ENCODE measurements at regions of chr4 and their contacts with region 1.

Region 1: DNA sequence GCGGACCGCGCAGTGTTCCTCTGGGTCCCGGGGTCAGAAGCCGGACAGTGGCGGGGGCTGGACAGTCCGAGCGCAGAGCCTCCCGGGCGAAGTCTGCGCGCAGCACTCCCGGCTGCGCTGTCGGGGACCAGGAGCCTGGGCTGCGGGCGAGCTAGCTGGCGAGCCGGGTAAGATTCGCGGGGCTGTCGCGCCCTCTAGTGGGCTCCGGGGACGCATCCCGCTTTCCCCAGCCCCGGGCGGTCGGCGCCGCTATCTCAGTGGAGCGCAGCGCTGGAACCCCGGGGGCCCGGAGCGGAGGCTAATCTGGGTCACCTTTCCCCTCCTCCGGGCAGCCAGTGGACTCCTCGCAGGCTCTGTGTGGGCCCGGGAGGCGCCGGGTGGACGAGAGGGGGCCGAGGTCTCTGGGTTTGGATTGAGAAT is 4.2 kb downstream of the PDGFRA start:
- DNase-seq: peak in 1 of 2 experiments; percentile 92
- H3K4me3 ChIP-seq: peak overlapping the region; percentile 51 to 85 (median 66)
- H3K27ac ChIP-seq: no peak overlapping the region
- H3K4me1 ChIP-seq: peaks cover 0 to 22% (median 15%) of the 10 kb centered on the region in 4 experiments; a peak in 6 of 7 replicates
- H3K27me3 ChIP-seq: peaks cover 38 to 56% (median 52%) of the 10 kb centered on the region in 4 experiments
- CTCF ChIP-seq: peak in 2 of 3 experiments; percentile 74 to 86; a peak in 3 of 4 replicates
- EP300 ChIP-seq: no peak
- POLR2A ChIP-seq: no peak
- RAD21 ChIP-seq: peak; percentile 79 to 90

Region 2: GRCh38 chr4:53015681-53016080 is 1217.6 kb before region 1 on chr4:
- CTCF ChIA-PET with region 1: interaction called, 51 read pairs
- POLR2A ChIA-PET with region 1: no interaction called
- DNase-seq: peak in 1 of 2 experiments; percentile 3
- H3K4me3 ChIP-seq: no peak overlapping the region
- H3K27ac ChIP-seq: no peak overlapping the region
- H3K4me1 ChIP-seq: no peaks in the 10 kb centered on the region; a peak in 1 of 7 replicates
- H3K27me3 ChIP-seq: no peaks in the 10 kb centered on the region
- CTCF ChIP-seq: peak in 2 of 3 experiments; percentile 58 to 67; a peak in 3 of 4 replicates
- EP300 ChIP-seq: no peak
- POLR2A ChIP-seq: no peak
- RAD21 ChIP-seq: peak; percentile 93 to 96

Region 3: GRCh38 chr4:53908661-53909078 is 324.6 kb before region 1 on chr4:
- CTCF ChIA-PET with region 1: interaction called, 65 read pairs
- POLR2A ChIA-PET with region 1: no interaction called
- DNase-seq: no peak
- H3K4me3 ChIP-seq: no peak overlapping the region
- H3K27ac ChIP-seq: no peak overlapping the region
- H3K4me1 ChIP-seq: peaks cover 0 to 7% (median 3%) of the 10 kb centered on the region in 4 experiments; a peak in 3 of 7 replicates
- H3K27me3 ChIP-seq: no peaks in the 10 kb centered on the region; a peak in 2 of 7 replicates
- CTCF ChIP-seq: peak in 2 of 3 experiments; percentile 55 to 76; a peak in 3 of 4 replicates
- EP300 ChIP-seq: no peak
- POLR2A ChIP-seq: no peak
- RAD21 ChIP-seq: peak; percentile 83 to 85

Region 4: DNA sequence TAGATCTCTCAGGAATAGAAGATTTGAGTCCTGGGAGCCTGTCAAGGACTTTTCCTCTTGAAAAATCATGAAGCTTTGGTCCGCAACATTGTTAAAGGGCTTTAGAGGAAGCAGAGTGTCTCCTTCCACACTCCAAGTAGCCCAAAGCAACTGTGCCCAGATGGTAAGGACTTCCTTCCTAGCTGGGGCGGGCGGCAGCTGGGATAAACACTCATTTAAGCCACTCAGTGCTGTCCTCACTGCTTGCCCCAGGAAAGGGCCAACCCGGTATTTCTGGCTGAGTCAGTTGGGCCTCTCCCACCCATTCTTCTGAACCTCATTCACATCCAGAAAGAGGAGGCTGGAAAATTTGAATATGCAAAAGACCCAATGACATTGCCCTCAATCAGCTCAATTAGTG is 313.2 kb before region 1 on chr4:
- CTCF ChIA-PET with region 1: interaction called, 13 read pairs
- POLR2A ChIA-PET with region 1: no interaction called
- DNase-seq: no peak
- H3K4me3 ChIP-seq: no peak overlapping the region
- H3K27ac ChIP-seq: no peak overlapping the region
- H3K4me1 ChIP-seq: peaks cover 0 to 15% (median under 1%) of the 10 kb centered on the region in 4 experiments; a peak in 4 of 7 replicates
- H3K27me3 ChIP-seq: no peaks in the 10 kb centered on the region
- CTCF ChIP-seq: no peak
- EP300 ChIP-seq: no peak
- POLR2A ChIP-seq: no peak
- RAD21 ChIP-seq: no peak

Region 5: DNA sequence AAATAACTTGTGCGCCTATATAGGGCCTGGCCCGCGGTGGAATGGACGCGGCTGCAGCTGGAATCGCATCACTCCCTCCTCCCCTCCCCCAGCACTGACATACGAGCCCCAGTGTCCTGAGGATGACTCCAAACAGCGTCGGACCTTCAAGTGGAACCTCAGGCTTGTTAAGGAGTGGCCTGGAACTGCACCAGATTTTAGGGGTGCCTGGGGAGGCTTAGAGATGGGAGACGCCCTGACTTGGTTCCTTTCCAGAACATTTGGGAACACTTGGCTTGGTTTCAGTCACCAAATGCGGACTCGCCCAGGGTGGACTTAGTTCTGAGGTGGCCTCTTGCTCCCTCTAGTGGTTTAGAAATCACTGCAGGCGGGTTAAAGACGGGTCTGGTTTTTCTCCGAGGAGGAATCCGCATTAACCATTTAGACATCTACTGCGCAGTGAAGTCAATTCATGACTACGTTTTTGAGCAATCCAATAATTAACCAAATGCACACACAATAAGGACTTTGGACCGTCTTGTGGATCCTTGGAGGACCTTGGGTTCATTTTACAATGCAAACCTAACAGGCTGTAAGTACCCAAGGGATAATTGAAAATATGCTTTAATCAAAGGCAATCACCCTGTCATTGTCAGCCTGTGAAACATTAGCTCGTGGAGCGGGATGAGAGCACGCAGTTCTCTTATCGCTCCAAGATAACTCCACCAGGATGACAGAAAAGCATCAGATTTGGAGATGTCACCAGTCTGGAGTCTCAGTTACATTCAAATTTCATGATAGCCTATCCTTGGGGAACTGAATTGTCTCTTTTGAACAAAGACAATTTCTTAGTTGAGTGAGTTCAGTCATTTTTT is 15.4 kb before region 1 on chr4:
- CTCF ChIA-PET with region 1: interaction called, 50 read pairs
- POLR2A ChIA-PET with region 1: no interaction called
- DNase-seq: peak in 1 of 2 experiments; percentile 81
- H3K4me3 ChIP-seq: peak overlapping the region; percentile 12 to 59 (median 42); a peak in 6 of 8 replicates
- H3K27ac ChIP-seq: no peak overlapping the region
- H3K4me1 ChIP-seq: no peaks in the 10 kb centered on the region
- H3K27me3 ChIP-seq: peaks cover 0 to 34% (median 18%) of the 10 kb centered on the region in 4 experiments; a peak in 6 of 7 replicates
- CTCF ChIP-seq: peak; percentile 58 to 86 (median 83)
- EP300 ChIP-seq: no peak
- POLR2A ChIP-seq: no peak
- RAD21 ChIP-seq: peak; percentile 90 to 93

Region 6: DNA sequence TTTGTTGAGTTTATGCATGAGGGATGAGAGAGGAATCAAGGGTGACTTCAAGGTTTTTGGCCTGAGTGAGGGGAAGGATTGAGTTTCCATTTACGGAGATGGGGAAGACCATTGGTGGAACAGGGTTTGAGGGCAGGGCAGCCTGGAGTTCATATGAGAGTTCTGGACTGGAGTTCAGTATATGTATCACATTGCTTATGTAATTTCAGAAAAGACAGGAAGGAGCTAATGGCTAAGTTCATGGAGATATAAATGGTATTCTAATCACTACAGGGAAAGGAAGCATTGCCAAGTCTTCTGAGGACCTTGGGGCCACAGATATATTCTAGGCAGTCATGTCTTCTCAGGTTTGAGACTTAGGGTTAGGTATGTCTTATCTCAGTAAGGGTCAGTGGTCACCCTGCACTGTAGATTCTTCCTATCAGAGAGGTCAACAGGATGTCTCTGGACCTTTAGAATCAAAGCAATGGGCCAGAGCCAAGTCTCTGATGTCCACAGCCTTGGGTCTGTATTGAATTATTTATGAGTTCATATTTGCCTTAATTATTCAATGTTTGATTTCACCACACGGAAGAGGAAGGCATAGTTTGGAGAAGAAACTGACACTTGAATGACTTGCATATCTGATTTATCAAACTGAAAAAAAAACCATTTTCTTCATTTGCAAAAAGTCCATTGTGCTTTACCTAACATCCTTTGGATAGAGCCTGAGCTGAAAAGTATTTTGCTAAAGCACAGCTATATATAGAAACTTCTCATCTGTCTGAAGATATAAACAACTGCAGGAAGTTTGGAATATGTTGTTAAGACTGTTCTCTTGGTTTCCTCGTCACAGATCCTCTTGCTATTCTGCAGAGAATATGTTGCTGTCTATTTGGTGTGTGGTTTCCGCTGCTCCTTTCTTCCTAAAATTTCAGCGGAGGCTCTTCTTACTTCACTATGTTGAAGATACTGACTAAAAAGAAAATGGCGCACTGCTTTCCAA is 135.3 kb after region 1 on chr4:
- CTCF ChIA-PET with region 1: no interaction called
- POLR2A ChIA-PET with region 1: no interaction called
- DNase-seq: no peak
- H3K4me3 ChIP-seq: no peak overlapping the region
- H3K27ac ChIP-seq: no peak overlapping the region
- H3K4me1 ChIP-seq: no peaks in the 10 kb centered on the region
- H3K27me3 ChIP-seq: no peaks in the 10 kb centered on the region
- CTCF ChIP-seq: no peak
- EP300 ChIP-seq: no peak
- POLR2A ChIP-seq: no peak
- RAD21 ChIP-seq: no peak